ENCODE measurements at regions of chr17 and their contacts with region 1.

Region 1: DNA sequence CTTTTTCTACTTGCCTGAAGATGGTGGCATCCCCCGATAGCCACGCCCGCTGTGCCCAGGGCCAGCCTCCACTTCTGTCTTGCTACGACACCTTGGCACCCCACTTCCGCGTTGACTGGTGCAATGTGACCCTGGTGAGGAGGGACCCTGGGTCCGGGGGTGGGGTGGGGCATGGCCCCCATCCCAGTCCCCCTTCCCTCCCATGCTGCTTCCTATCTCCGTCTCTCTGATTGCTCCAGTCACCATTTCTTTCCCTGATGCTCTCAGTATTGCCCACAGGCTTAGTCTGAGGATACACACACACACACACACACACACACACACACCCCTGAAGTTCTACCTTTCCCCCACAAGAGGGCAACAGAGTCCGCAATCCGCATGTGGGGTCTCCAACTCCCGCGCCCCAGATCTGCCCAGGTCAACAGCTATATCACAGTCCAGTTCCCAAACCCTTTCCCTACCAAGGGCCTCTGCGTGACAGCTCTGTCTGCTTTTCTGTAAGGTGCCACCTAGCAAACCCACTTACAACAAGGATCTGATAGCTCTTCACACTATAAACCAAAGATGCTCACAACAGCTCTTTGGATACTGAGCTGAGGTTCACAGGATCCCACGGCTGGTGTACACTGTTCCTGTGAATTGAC is 3.4 kb downstream of the SGCA start:
- DNase-seq: peak; percentile 71
- ATAC-seq: peak; percentile 86
- H3K4me3 Mint-ChIP-seq: peak overlapping the region; percentile 44
- H3K27ac Mint-ChIP-seq: peak overlapping the region; percentile 60
- H3K4me1 Mint-ChIP-seq: peaks cover 10% of the 10 kb centered on the region
- H3K27me3 Mint-ChIP-seq: peaks cover 3% of the 10 kb centered on the region
- CTCF ChIP-seq: peak; percentile 63

Region 2: DNA sequence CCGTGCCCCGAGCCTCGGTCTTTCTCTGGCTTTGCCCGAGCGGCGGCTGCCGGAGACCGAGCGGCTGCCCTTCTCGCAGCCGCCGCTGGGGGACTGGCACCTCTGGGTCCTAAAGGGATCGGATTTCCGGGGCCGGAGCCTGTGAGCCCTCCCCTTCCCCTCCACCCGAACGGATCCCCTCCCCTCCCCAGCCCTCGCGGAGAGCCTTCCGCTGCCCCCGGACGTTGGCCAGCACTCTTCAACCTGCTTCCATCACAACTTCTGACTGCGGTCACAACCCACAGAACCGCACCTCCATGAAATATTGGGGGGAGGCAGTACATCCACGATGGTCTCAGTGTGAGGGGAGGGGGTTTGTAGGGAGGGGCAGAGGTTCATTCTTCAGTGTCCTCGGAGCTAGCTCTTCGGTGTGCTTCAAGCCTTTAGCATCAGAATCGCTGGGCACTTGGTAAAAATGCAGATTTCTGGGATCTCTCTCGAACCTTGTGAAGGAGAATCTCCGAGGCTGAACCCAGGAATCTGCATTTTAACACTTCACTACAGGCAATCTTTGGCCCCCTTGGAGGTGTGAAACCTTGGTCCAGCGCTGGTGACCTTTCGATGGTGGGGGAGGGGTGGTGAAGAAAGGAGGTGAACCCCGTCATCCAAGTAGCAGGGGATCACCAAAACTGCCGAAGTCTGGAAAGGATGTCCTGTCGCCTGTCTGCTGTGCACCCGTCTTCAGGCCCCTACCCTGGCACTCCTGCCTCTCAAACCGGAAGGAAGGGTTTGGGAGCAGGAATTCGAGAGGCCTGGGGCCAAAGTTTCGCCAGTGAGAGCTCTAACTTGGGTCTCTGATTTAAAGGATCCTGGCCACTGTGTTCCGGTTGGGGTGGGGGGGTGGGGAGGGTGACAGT is 18.0 kb before region 1 on chr17:
- CTCF ChIA-PET with region 1: interaction called, 14 read pairs
- POLR2A ChIA-PET with region 1: interaction called, 6 read pairs
- intact Hi-C with region 1: no loop called
- DNase-seq: peak; percentile 94
- ATAC-seq: peak; percentile 75
- H3K4me3 Mint-ChIP-seq: peak overlapping the region; percentile 82
- H3K27ac Mint-ChIP-seq: peak overlapping the region; percentile 96
- H3K4me1 Mint-ChIP-seq: peaks cover 41% of the 10 kb centered on the region
- H3K27me3 Mint-ChIP-seq: no peaks in the 10 kb centered on the region
- CTCF ChIP-seq: no peak

Region 3: DNA sequence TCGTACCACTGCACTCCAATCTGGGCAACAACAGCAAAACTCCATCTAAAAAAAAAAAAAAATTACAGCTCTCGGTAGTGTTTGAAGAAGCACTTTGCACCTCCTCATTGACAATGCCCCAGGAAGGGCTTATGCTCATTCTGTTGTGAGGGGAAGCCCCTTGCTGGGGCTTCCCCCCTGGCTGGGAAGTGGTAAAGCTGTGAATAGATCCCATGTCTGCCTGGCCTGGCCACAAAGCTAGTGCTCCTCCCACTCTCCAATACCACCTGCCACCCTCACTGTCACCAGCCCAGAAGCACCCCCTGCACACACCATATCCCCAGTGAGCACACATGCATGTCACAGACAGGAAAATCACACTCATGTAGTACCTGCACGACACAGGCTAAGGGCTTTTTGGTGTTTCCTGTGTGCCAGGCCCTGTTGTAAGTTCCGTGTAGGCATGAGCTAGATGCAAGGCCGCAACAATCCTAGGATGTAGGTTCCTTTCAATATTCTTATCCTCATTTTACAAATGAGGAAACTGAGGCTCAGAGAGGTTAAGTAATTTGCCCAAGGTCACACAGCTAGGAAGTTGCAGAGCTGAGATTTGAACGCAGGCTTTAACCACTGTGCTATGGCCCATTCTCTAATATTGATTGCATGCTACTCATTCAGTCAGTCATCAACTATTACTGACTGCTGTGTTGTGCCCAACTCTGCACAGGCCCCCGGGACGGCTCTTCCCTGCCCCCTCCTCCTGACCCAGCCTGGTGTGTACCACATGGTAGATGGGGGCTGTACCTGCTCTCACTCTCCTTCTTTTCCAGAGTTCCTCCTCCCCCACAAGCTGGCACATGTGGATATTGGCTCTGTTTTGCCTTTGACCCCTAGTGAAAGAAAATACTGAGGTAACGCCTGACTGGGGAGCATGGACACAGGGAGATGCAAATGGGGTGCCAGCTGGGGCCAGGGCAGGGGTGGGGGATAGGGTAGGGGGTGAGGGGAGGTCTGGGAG is 44.1 kb after region 1 on chr17:
- CTCF ChIA-PET with region 1: interaction called, 13 read pairs
- POLR2A ChIA-PET with region 1: no interaction called
- intact Hi-C with region 1: no loop called
- DNase-seq: peak; percentile 88
- ATAC-seq: peak; percentile 99
- H3K4me3 Mint-ChIP-seq: no peak overlapping the region
- H3K27ac Mint-ChIP-seq: no peak overlapping the region
- H3K4me1 Mint-ChIP-seq: peaks cover 22% of the 10 kb centered on the region
- H3K27me3 Mint-ChIP-seq: peaks cover 25% of the 10 kb centered on the region
- CTCF ChIP-seq: no peak

Region 4: DNA sequence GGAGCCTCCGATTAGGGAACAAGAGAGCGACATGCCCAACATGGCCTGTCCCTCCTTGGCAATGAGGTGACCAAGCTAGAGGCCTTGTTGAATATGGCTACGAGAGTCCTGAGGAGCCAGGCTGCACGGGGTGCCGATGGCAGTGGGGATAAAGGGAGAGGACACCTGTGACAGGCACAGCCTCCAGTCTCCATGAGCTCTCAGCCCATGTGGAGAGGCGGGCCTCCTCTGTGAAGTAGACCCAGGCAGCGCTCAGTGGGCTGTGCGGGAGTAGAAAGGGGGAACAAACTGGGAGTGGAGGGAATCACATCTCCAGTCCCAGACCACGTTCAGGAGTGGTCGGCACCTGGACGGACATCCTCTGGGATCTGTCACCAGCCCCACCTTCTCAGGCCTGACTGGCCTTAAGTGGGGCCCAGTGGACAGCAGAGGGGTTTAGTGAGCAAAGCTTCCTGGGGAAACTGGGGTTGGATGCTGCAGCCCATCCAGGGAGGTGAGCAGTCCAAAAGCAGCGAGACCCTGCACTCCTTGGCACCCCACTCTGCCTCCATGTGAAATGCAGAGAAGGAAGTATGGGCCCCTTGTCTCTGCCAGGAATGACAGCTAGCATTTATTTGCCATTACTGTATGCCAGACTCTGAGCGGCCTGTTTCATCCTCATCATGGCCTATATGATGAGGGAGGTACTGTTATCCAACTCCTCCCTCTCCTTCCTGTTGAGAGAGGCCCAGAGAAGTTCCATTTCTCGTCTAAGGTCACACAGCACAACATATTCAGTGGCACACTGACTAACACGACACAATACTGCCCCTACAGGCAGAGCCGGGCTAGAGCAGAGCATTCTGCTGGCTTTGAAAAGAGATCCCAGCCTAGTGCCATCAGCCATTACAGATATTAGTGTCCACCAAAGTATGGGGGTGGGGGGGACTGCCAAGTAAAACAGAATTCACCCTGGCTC is 100.5 kb after region 1 on chr17:
- CTCF ChIA-PET with region 1: interaction called, 20 read pairs
- POLR2A ChIA-PET with region 1: interaction called, 3 read pairs
- intact Hi-C with region 1: no loop called
- DNase-seq: peak; percentile 88
- ATAC-seq: peak; percentile 94
- H3K4me3 Mint-ChIP-seq: no peak overlapping the region
- H3K27ac Mint-ChIP-seq: no peak overlapping the region
- H3K4me1 Mint-ChIP-seq: peaks cover 9% of the 10 kb centered on the region
- H3K27me3 Mint-ChIP-seq: peaks cover 11% of the 10 kb centered on the region
- CTCF ChIP-seq: peak; percentile 73

Region 5: GRCh38 chr17:50297407-50297865 is 128.2 kb after region 1 on chr17:
- CTCF ChIA-PET with region 1: interaction called, 54 read pairs
- POLR2A ChIA-PET with region 1: interaction called, 3 read pairs
- intact Hi-C with region 1: no loop called
- DNase-seq: peak; percentile 87
- ATAC-seq: peak; percentile 100
- H3K4me3 Mint-ChIP-seq: no peak overlapping the region
- H3K27ac Mint-ChIP-seq: no peak overlapping the region
- H3K4me1 Mint-ChIP-seq: no peaks in the 10 kb centered on the region
- H3K27me3 Mint-ChIP-seq: peaks cover 2% of the 10 kb centered on the region
- CTCF ChIP-seq: peak; percentile 98

Measured in activated CD8-positive, alpha-beta T cell treated with anti-CD3 and anti-CD28 coated beads for 36 hours (primary cell).